ENCODE measurements at regions of chr14 and their contacts with region 1.

Region 1: GRCh38 chr14:76911473-76911872 is 85.3 kb downstream of the LRRC74A start:
- DNase-seq: no peak
- H3K4me3 Mint-ChIP-seq: no peak overlapping the region
- H3K27ac Mint-ChIP-seq: no peak overlapping the region
- H3K4me1 Mint-ChIP-seq: peaks cover 72% of the 10 kb centered on the region
- H3K27me3 Mint-ChIP-seq: no peaks in the 10 kb centered on the region

Region 2: GRCh38 chr14:76829650-76830421 is 81.6 kb before region 1 on chr14:
- CTCF ChIA-PET with region 1: no interaction called
- DNase-seq: no peak
- H3K4me3 Mint-ChIP-seq: no peak overlapping the region
- H3K27ac Mint-ChIP-seq: no peak overlapping the region
- H3K4me1 Mint-ChIP-seq: no peaks in the 10 kb centered on the region
- H3K27me3 Mint-ChIP-seq: peaks cover 53% of the 10 kb centered on the region

Region 3: DNA sequence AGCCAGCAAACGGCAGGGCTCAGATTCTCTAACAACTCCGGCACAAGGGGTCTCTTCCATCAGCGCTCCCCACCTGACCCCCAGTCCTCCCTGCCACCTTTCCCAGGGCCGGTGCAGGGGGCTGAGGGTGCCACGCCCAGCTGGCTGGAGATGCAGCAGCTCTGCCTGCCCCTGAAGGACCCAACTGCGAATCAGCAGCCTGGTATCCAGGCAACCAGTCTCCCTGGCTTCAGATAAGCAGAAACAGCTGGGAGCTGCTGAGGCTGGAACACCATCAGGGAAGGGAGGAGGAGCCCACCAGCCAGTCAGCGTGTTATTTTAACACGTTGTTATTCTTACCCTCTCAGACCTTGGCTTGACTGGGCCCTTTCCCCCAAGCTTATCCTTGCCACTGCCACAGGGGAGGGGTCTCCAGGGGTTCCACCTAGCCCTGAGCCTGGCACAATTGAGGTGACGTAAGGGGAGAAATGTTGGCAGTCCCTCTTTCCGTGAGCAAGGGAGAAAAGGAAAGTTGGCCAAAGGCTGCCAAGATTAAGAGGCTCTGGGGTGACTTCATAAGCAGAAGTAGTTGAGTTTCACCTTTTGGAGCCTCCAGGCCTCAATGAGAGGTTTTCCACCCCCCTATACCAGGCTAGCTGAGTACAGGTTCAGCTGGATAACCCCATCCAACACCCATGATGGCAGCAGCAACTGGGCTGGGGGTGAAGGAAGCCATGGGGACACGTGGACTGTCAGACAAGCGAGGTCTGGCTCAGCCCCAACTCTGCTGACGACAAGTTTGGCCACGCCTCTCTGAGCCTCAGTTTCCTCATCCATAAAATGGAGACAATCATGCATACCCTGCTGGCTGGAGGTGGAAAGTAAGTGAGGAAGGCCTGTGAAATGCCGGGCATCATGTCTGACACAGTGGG is 26.0 kb after region 1 on chr14:
- CTCF ChIA-PET with region 1: interaction called, 31 read pairs
- DNase-seq: no peak
- H3K4me3 Mint-ChIP-seq: no peak overlapping the region
- H3K27ac Mint-ChIP-seq: no peak overlapping the region
- H3K4me1 Mint-ChIP-seq: peaks cover 25% of the 10 kb centered on the region
- H3K27me3 Mint-ChIP-seq: peaks cover 21% of the 10 kb centered on the region

Region 4: DNA sequence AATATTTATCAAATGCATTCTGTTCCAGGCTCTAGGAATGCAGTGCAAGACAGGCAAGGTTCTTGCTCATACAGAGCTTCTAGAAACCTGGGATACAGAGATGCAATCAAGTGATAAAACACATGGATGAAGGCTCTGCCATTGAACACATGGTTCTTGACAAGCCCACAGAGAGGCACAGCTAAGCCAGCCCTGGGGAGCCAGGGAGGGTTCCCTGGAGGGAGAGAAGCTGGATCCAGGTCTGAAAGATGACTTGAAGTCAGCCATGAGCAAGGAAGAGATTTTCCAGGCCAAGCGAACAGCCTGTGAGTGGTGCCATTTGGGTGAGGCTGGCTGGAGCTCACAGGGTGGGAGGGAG is 50.8 kb after region 1 on chr14:
- CTCF ChIA-PET with region 1: interaction called, 55 read pairs
- DNase-seq: no peak
- H3K4me3 Mint-ChIP-seq: peak overlapping the region; percentile 69
- H3K27ac Mint-ChIP-seq: peak overlapping the region; percentile 96
- H3K4me1 Mint-ChIP-seq: peaks cover 90% of the 10 kb centered on the region
- H3K27me3 Mint-ChIP-seq: peaks cover 27% of the 10 kb centered on the region

Region 5: GRCh38 chr14:77028384-77029231 is 117.1 kb after region 1 on chr14 and contains the start of gene IRF2BPL:
- CTCF ChIA-PET with region 1: interaction called, 46 read pairs
- DNase-seq: peak; percentile 96
- H3K4me3 Mint-ChIP-seq: peak within 1 kb of the TSS; percentile 93
- H3K27ac Mint-ChIP-seq: peak within 1 kb of the TSS; percentile 97
- H3K4me1 Mint-ChIP-seq: peaks cover 72% of the 10 kb centered on the region
- H3K27me3 Mint-ChIP-seq: no peaks in the 10 kb centered on the region

Region 6: DNA sequence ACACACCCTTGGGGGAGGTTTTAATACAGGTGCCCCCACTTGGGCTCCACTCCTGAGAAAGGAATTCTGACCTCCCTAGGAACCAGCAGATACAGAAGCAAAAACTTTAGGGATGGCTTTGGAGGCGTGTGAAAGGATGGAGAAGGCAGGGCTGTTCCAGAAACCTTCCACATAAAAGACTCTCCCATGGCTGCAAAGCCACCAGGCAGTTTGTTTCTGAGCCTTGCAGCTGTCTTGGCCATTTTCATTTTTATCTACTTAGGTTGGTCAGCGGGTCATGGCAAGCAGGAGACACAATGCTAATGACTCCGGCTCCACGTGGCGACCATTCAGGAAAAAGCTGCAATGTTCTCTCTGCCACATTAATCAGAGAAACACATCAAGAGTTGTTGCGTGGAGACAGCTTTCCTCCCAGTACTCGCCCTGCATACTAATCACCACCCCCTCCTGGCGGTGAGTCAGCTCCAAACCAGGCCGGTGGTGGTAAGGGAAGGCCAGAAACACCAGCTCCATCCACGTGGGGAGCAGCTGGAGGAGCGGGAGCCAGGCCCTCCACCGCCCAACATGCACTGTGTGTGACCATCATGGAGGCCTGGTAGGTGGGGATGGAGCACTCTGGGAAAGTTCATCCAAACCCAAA is 147.9 kb after region 1 on chr14:
- CTCF ChIA-PET with region 1: interaction called, 273 read pairs
- DNase-seq: no peak
- H3K4me3 Mint-ChIP-seq: no peak overlapping the region
- H3K27ac Mint-ChIP-seq: no peak overlapping the region
- H3K4me1 Mint-ChIP-seq: peaks cover 20% of the 10 kb centered on the region
- H3K27me3 Mint-ChIP-seq: peaks cover 8% of the 10 kb centered on the region

Region 7: DNA sequence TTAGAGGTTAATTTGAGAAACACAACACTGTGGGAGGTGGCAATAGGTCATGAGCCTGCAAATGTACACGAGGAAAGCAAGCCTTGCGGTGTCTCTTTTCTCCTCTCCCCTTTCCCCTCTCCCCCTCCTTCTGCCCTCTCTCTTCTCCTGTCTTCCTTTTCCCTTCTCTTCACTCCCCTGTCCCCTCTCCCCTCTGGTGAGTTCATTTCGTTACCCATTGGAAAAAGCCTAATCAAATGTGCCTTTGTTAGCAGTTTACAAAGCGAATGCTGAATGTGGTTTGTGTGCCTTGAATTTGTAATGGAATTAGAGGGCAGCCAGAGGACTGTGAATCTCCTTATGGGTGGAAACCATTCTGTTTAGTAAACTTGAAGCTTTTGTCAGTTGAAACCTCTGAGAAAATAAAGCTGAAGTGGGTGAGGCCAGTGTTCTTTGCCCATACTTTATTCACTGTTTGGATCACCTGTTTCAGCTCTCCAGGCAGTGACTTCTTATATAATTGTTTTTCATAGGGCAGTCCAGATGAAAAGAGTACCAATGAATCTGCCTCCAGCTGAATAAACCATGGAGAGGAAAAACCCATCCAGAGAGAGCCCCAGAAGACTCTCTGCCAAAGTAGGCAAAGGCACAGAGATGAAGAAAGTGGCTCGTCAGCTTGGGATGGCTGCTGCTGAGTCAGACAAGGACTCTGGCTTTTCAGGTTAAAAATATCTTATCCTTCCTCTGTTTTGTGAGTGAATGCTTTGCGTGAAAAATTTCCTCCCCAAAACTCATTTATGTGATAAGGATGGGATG is 193.9 kb after region 1 on chr14:
- CTCF ChIA-PET with region 1: no interaction called
- DNase-seq: no peak
- H3K4me3 Mint-ChIP-seq: no peak overlapping the region
- H3K27ac Mint-ChIP-seq: no peak overlapping the region
- H3K4me1 Mint-ChIP-seq: no peaks in the 10 kb centered on the region
- H3K27me3 Mint-ChIP-seq: no peaks in the 10 kb centered on the region